Aorta (tissue), 5 donors: ENCODE measurements at regions of chr14 and their contacts with region 1.

Region 1: DNA sequence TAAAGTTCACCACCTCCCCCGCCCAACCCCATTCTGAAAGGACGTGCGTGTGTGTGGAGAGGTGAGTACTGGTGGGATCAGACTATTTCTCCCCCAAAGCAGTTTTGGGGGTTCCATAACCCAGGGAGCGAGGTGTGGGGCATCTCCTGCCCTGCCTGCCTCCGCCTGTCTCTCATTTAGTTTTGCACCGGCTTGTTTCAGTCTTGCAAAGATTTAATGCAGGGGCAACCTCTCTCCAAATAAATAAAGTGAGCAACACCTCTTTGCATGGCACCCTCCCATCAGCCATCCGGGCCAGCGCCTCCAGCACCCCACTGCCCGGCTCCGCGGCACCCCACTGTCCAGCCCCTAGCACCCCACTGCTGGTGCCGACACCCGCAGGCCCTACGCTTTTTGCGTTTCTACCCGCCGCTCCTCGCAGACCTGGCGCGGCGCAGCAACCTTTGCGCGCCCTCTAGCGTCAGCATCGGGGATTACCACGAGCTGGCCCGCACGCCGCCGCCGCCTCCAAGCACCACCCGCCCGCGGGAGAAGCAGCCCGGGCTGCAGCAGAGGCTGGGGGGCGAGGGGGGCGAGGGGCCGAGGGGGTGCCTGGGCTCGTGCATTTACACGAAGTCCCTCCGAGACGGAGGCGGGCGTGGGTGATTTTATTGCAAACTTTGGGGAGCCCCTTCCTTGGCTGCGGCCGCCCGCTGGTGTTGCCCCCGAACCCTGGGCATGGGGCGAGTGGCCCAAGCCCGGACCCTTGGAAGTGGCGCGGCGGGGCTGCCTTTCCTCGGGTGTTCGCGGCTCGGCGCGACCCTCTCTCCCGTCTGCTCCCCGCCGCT is 55.8 kb upstream of the VRK1 start:
- DNase-seq: peak; percentile 60 to 88
- ATAC-seq: peak; percentile 87
- H3K4me3 ChIP-seq: no peak overlapping the region
- H3K27ac ChIP-seq: no peak overlapping the region
- H3K4me1 ChIP-seq: no peaks in the 10 kb centered on the region
- H3K27me3 ChIP-seq: peaks cover 0 to 1% of the 10 kb centered on the region in 2 donors

Region 2: DNA sequence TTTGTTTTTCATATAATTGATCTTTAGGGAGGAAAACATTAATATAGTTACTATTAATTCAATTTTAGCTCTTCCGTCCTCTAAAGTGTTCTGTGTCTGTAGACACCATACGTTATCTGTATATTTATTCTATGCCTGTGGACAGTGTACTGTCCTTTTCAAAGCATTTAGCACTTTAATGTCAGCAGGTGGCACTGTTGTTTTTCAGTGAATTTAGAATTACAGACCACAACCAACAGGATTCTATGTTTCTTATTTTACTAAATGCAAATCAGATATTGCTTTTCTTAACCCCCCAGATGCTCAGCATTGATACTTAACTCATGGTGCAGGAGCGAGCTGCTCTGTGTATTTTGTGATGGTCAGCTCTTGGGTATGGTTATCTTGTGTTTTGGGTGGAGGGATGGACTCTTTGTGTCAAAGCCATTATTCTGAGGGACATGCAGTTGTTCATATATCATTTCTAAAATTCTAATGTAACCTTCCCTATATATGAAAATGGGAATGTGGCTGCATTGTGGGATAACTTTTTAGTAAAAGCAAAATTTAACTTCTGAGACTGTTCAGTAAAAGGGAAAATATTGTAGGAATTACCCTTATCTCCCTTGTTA is 174.0 kb before region 1 on chr14:
- intact Hi-C with region 1: loop called (anchors 5 to 10 kb)
- DNase-seq: no peak
- ATAC-seq: no peak
- H3K4me3 ChIP-seq: no peak overlapping the region
- H3K27ac ChIP-seq: no peak overlapping the region
- H3K4me1 ChIP-seq: no peaks in the 10 kb centered on the region
- H3K27me3 ChIP-seq: no peaks in the 10 kb centered on the region

Region 3: GRCh38 chr14:96574633-96575632 is 166.4 kb before region 1 on chr14:
- intact Hi-C with region 1: loop called in 1 of 2 experiments (anchors 10 kb)
- DNase-seq: no peak
- ATAC-seq: no peak
- H3K4me3 ChIP-seq: no peak overlapping the region
- H3K27ac ChIP-seq: no peak overlapping the region
- H3K4me1 ChIP-seq: peaks cover 0 to 12% of the 10 kb centered on the region in 2 donors
- H3K27me3 ChIP-seq: no peaks in the 10 kb centered on the region

Region 4: GRCh38 chr14:96917442-96917963 is 176.1 kb after region 1 on chr14:
- intact Hi-C with region 1: no loop called
- DNase-seq: no peak
- ATAC-seq: no peak
- H3K4me3 ChIP-seq: no peak overlapping the region
- H3K27ac ChIP-seq: no peak overlapping the region
- H3K4me1 ChIP-seq: no peaks in the 10 kb centered on the region
- H3K27me3 ChIP-seq: no peaks in the 10 kb centered on the region

Region 5: DNA sequence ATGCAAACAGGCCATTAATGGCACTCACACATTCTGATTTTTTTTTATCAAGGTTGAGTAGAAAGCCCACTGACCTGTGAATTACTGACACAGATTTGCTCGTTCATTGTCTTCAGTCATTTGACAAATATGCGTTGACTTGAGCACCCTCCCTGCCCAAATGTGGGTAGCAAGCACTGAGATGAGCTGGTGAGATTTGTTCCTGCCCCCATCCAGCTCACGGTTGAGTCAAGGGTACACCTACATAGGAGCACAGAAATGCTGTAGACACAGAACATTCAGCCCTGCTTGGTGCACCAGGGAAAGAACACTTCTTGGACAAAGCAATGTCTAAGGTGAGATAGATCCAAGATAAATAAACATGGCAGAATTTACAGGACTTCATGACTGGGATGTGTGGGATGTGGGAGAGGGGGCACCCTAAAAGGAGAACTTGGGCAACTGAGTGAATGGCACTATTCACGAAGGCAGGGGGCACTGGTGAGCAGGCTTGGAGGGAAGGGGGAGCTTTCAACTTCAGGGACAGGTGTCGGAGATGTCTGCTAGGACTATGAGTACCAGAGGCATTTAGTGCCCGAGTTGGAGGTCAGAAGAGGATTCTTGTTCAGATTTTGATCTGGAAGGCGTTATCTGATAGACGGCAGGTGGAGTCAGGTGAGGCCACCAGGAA is 269.3 kb after region 1 on chr14:
- intact Hi-C with region 1: no loop called
- DNase-seq: no peak
- ATAC-seq: no peak
- H3K4me3 ChIP-seq: no peak overlapping the region
- H3K27ac ChIP-seq: no peak overlapping the region
- H3K4me1 ChIP-seq: no peaks in the 10 kb centered on the region
- H3K27me3 ChIP-seq: no peaks in the 10 kb centered on the region